Endothelial cell of umbilical vein (primary cell): ENCODE measurements at regions of chr10 and their contacts with region 1.

Region 1: GRCh38 chr10:17062955-17063484 is 66.6 kb downstream of the CUBN start:
- DNase-seq: peak; percentile 90
- H3K4me3 ChIP-seq: peak overlapping the region in 1 of 3 experiments; percentile 20
- H3K27ac ChIP-seq: peak overlapping the region; percentile 100
- H3K4me1 ChIP-seq: peaks cover 76% of the 10 kb centered on the region
- H3K27me3 ChIP-seq: no peaks in the 10 kb centered on the region
- CTCF ChIP-seq: no peak
- POLR2A ChIP-seq: peak; percentile 44

Region 2: DNA sequence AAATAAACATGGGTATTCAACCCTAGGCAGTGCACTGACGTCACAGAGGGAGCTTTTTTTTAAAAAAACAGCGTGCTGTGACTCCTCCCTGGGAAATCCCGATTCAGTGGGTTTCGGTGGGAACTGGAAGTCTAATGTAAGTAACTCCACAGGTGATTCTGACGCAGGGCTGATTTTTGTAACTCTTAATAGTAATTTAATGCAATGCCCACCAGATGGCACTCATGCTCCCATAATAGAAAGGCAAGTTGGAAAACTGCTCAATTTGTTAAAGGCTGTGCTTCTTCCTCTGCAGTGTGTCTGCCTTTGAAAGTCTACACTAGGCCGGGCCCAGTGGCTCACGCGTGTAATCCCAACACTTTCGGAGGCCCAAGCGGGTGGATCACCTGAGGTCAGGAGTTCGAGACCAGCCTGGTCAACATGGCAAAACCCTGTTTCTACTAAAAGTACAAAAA is 234.9 kb before region 1 on chr10:
- CTCF ChIA-PET with region 1: no interaction called
- POLR2A ChIA-PET with region 1: no interaction called
- dilution Hi-C with region 1: no loop called
- intact Hi-C with region 1: loop called (anchors 1 kb)
- DNase-seq: peak; percentile 93
- H3K4me3 ChIP-seq: peak overlapping the region in 1 of 3 experiments; percentile 51
- H3K27ac ChIP-seq: peak overlapping the region; percentile 71
- H3K4me1 ChIP-seq: peaks cover 34% of the 10 kb centered on the region
- H3K27me3 ChIP-seq: no peaks in the 10 kb centered on the region
- CTCF ChIP-seq: peak; percentile 35 to 39
- POLR2A ChIP-seq: no peak

Region 3: GRCh38 chr10:16909961-16910792 is 152.8 kb before region 1 on chr10:
- CTCF ChIA-PET with region 1: no interaction called
- POLR2A ChIA-PET with region 1: no interaction called
- dilution Hi-C with region 1: no loop called
- intact Hi-C with region 1: loop called (anchors 5 kb)
- DNase-seq: peak; percentile 60
- H3K4me3 ChIP-seq: no peak overlapping the region
- H3K27ac ChIP-seq: peak overlapping the region; percentile 82
- H3K4me1 ChIP-seq: peaks cover 20% of the 10 kb centered on the region
- H3K27me3 ChIP-seq: no peaks in the 10 kb centered on the region
- CTCF ChIP-seq: no peak
- POLR2A ChIP-seq: no peak

Region 4: DNA sequence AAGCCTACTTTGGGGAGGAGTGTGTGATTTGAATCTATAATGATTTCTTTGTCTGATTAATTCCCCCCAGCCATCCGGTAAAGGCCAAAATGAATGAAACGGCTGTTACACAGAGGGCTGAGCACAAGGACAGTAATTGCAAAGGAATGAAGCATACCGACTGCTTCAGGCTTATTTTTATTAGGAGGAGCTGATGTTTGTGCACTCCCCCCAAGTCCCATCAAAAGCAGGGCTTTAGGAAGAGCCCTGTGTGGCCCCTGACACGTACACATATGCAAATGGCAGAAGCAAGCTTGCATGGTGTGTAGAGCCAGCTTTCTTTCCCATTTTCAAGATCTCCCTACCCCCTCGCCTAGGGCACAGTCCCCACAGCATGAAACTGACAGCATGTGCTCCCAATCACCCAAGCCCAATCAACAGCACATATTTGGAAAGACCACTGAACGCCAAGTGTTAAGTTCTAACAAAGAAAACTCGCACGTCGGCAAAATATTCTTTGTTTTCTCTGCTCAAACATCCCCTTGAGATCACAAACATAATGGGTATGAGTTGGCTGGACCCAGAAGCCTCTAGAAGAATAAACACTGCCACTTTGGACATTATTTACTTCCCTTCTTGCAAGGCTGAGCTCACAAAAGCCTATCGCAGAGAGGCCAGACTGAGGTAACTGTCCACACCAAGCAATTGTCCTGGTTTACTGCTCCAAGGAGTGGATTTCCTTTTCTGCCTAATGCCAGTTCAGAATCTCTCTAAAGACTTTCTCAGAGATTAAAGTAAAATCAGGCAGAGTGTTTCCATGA is 76.4 kb before region 1 on chr10:
- CTCF ChIA-PET with region 1: no interaction called
- POLR2A ChIA-PET with region 1: no interaction called
- dilution Hi-C with region 1: no loop called
- intact Hi-C with region 1: no loop called
- DNase-seq: peak; percentile 88
- H3K4me3 ChIP-seq: no peak overlapping the region
- H3K27ac ChIP-seq: peak overlapping the region; percentile 96
- H3K4me1 ChIP-seq: peaks cover 27% of the 10 kb centered on the region
- H3K27me3 ChIP-seq: no peaks in the 10 kb centered on the region
- CTCF ChIP-seq: no peak
- POLR2A ChIP-seq: no peak

Region 5: DNA sequence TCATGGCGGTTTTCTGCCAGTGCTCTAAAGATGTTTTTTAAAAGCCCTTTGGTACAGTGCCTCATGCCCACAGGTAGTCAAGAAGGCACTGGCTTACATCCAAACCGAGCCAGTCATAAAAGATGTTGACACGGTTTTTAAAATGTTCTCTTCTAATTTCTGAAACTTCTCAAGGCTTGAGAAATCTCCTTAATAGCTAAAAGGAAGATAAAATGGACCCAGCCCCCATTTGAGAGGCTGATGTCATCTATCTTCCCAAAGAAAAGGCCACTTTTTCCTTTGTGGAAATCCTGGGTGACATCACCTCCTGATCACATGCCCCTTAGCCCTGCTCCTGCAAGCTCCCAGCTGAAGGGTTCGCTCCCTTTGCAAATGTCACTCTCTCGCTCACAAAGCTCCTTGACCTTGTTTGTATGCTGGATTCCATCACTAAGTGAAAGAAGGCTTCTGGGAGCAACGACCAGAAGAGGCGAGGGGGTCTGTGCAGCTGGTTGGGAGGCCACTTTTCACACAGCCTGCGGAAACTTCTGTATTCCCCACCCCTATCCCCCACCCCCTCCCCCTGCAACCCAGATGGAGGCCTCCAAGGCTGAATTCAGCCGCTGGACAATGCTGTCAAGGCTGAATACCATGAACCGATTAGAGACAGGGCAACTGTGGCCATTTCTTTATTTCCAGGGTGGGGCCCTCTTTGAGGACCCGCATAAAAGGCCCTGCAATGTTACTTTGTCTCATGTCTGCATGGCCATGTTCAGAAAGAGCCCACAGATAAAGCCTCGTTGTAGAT is 56.2 kb before region 1 on chr10:
- CTCF ChIA-PET with region 1: no interaction called
- POLR2A ChIA-PET with region 1: no interaction called
- dilution Hi-C with region 1: no loop called
- intact Hi-C with region 1: loop called (anchors 1 kb)
- DNase-seq: peak; percentile 88
- H3K4me3 ChIP-seq: no peak overlapping the region
- H3K27ac ChIP-seq: peak overlapping the region; percentile 89
- H3K4me1 ChIP-seq: peaks cover 63% of the 10 kb centered on the region
- H3K27me3 ChIP-seq: no peaks in the 10 kb centered on the region
- CTCF ChIP-seq: no peak
- POLR2A ChIP-seq: no peak

Region 6: GRCh38 chr10:17075533-17076359 is 12.7 kb after region 1 on chr10:
- CTCF ChIA-PET with region 1: interaction called, 18 read pairs
- POLR2A ChIA-PET with region 1: interaction called, 6 read pairs
- dilution Hi-C with region 1: no loop called
- intact Hi-C with region 1: loop called (anchors 1 kb)
- DNase-seq: peak; percentile 89
- H3K4me3 ChIP-seq: no peak overlapping the region
- H3K27ac ChIP-seq: peak overlapping the region; percentile 95
- H3K4me1 ChIP-seq: peaks cover 49% of the 10 kb centered on the region
- H3K27me3 ChIP-seq: no peaks in the 10 kb centered on the region
- CTCF ChIP-seq: no peak
- POLR2A ChIP-seq: no peak

Region 7: GRCh38 chr10:17216217-17216900 is 153.3 kb after region 1 on chr10:
- CTCF ChIA-PET with region 1: interaction called, 5 read pairs
- POLR2A ChIA-PET with region 1: interaction called, 4 read pairs
- dilution Hi-C with region 1: no loop called
- intact Hi-C with region 1: loop called (anchors 1 kb)
- DNase-seq: peak; percentile 98
- H3K4me3 ChIP-seq: peak overlapping the region in 1 of 3 experiments; percentile 3
- H3K27ac ChIP-seq: peak overlapping the region; percentile 99
- H3K4me1 ChIP-seq: peaks cover 33% of the 10 kb centered on the region
- H3K27me3 ChIP-seq: no peaks in the 10 kb centered on the region
- CTCF ChIP-seq: no peak
- POLR2A ChIP-seq: peak; percentile 77